HCT116 (cell line): ENCODE measurements at regions of chr1 and their contacts with region 1.

Region 1: DNA sequence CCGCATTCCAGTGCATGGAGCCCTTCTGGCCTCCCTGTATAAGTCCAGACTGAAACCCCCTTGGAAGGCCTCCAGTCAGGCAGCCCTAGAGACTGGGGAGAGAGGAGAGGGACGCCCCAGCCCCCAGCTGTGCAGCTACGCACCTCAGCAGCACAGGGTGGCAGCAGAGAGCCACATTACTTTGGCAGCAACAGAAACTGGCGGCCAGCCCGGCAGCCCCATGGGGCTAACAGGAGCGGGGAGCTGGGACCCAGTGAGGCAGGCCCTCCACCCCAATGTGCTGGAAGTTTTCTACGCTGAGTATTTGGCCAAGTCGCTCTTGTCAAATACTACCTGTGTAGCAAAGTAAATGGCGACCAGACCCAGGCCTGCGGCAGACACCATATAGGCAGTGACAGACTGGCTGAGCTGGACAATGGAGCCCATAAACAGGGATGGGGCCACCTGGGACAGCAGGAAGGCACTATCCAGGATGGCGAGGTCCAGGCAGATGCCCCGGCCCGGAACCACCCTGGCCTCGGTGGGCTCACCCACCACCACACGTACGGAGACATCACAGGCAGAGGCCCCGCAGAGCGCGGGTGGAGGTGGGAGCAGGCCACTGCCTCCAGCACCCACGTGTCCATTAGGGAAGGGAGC is 21.2 kb downstream of the SLC45A3 start:
- DNase-seq: no peak
- ATAC-seq: peak; percentile 90
- H3K4me3 ChIP-seq: no peak overlapping the region
- H3K27ac ChIP-seq: no peak overlapping the region
- H3K4me1 ChIP-seq: peaks cover 4 to 10% of the 10 kb centered on the region in 2 experiments
- H3K27me3 ChIP-seq: no peaks in the 10 kb centered on the region
- CTCF ChIP-seq: peak; percentile 83 to 89 (median 88)
- POLR2A ChIP-seq: no peak
- RAD21 ChIP-seq: peak; percentile 96

Region 2: DNA sequence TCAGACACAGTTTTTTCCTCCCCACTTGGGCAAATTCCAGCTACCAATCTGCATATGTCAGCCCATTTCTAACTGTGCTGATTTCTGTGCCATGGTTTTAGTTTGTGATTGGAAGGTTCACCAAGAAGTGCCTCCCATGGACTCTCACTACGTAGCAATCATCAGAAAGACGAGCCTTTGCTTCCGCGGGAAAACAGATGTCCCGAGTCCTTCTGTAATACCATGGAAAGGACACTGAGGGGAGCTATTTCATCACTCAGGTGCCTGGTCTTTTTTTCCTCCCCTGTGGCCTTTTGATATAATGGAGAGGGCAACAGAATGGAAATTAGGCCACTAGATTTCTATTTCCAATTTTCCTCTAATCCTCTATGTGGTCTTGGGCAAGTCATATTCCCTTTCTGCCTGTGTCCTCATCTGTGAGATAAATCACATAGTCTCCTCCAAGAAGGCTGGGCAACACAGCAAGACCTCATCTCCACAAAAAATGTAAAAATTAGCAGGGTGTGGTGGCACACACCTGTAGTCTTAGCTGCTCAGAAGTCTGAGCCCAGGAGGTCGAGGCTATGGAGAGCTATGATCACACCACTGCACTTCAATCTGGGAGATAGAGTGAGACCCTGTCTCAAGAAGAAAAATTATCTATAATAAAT is 262.0 kb before region 1 on chr1:
- CTCF ChIA-PET with region 1: interaction called, 11 read pairs
- POLR2A ChIA-PET with region 1: no interaction called
- RAD21 ChIA-PET with region 1: interaction called in 1 of 2 experiments, 9 read pairs
- intact Hi-C with region 1: loop called (anchors 1 kb)
- DNase-seq: peak; percentile 77
- ATAC-seq: peak; percentile 99
- H3K4me3 ChIP-seq: no peak overlapping the region
- H3K27ac ChIP-seq: no peak overlapping the region
- H3K4me1 ChIP-seq: peaks cover 0 to 8% of the 10 kb centered on the region in 2 experiments; a peak in 2 of 4 replicates
- H3K27me3 ChIP-seq: no peaks in the 10 kb centered on the region
- CTCF ChIP-seq: peak; percentile 82 to 97 (median 93)
- POLR2A ChIP-seq: no peak
- RAD21 ChIP-seq: peak; percentile 99

Region 3: DNA sequence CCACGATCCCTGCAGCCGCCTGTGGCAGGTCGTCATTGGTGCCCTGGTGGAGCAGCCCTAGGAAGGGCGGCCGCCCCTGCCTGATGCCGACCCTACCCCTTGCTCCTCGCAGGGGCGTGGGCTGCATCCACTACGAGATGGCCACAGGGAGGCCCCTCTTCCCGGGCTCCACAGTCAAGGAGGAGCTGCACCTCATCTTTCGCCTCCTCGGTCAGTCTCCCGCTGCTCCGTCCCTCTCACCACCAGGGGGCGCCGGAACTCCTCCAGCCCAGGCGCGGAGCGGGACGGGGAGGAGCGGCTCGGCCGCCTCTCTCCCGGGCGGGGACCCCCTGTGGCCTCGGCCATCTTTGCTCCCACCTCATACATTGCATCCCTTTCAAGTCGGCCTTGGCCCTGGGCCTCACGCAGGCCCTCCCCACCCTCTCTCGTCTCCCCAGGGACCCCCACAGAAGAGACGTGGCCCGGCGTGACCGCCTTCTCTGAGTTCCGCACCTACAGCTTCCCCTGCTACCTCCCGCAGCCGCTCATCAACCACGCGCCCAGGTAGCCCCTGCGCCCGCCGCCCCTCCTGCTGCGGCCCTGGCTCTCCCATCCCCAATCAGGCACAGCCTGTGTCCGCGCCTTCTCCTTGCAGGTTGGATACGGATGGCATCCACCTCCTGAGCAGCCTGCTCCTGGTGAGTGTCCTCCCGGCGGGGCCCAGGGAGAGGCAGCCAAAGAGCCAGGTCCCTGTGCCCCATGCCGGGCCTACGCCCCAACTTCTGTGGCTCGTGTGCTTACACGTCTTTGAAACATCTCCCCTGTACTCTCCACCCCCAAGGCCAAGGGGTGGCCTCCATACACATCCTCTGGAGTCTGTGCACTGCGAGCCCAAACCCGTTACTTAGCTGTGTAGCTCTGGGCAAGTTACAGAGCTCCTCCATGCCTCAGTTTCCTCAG is 129.9 kb before region 1 on chr1:
- CTCF ChIA-PET with region 1: interaction called, 35 read pairs
- POLR2A ChIA-PET with region 1: no interaction called
- RAD21 ChIA-PET with region 1: interaction called, 6 to 21 read pairs
- intact Hi-C with region 1: loop called (anchors 1 kb)
- DNase-seq: peak; percentile 19
- ATAC-seq: peak; percentile 90
- H3K4me3 ChIP-seq: no peak overlapping the region
- H3K27ac ChIP-seq: no peak overlapping the region
- H3K4me1 ChIP-seq: peaks cover 0 to 4% of the 10 kb centered on the region in 2 experiments; a peak in 1 of 4 replicates
- H3K27me3 ChIP-seq: no peaks in the 10 kb centered on the region
- CTCF ChIP-seq: peak; percentile 74 to 89 (median 86)
- POLR2A ChIP-seq: no peak
- RAD21 ChIP-seq: peak; percentile 83

Region 4: GRCh38 chr1:205631727-205632373 is 27.2 kb before region 1 on chr1 and contains the start of gene ELK4:
- CTCF ChIA-PET with region 1: interaction called, 10 read pairs
- POLR2A ChIA-PET with region 1: interaction called, 6 read pairs
- RAD21 ChIA-PET with region 1: interaction called, 3 to 4 read pairs
- intact Hi-C with region 1: no loop called
- DNase-seq: peak; percentile 96
- ATAC-seq: peak; percentile 87
- H3K4me3 ChIP-seq: peak within 1 kb of the TSS; percentile 65 to 88
- H3K27ac ChIP-seq: peak within 1 kb of the TSS; percentile 96
- H3K4me1 ChIP-seq: peaks cover 14 to 16% of the 10 kb centered on the region in 2 experiments; a peak in 3 of 4 replicates
- H3K27me3 ChIP-seq: no peaks in the 10 kb centered on the region
- CTCF ChIP-seq: peak; percentile 54 to 72 (median 56); a peak in 5 of 6 replicates
- POLR2A ChIP-seq: peak; percentile 64
- RAD21 ChIP-seq: peak; percentile 78
- total RNA-seq, gene ELK4: 46.2 TPM

Region 5: GRCh38 chr1:205680073-205680851 is 21.2 kb after region 1 on chr1 and contains the start of gene SLC45A3:
- CTCF ChIA-PET with region 1: interaction called, 13 read pairs
- POLR2A ChIA-PET with region 1: no interaction called
- RAD21 ChIA-PET with region 1: interaction called in 1 of 2 experiments, 9 read pairs
- intact Hi-C with region 1: no loop called
- DNase-seq: no peak
- ATAC-seq: peak; percentile 79
- H3K4me3 ChIP-seq: peak within 1 kb of the TSS; percentile 64 to 78
- H3K27ac ChIP-seq: peak within 1 kb of the TSS; percentile 86
- H3K4me1 ChIP-seq: peaks cover 16 to 26% of the 10 kb centered on the region in 2 experiments
- H3K27me3 ChIP-seq: no peaks in the 10 kb centered on the region
- CTCF ChIP-seq: no peak
- POLR2A ChIP-seq: no peak
- RAD21 ChIP-seq: no peak
- total RNA-seq, gene SLC45A3: 12.3 TPM

Region 6: DNA sequence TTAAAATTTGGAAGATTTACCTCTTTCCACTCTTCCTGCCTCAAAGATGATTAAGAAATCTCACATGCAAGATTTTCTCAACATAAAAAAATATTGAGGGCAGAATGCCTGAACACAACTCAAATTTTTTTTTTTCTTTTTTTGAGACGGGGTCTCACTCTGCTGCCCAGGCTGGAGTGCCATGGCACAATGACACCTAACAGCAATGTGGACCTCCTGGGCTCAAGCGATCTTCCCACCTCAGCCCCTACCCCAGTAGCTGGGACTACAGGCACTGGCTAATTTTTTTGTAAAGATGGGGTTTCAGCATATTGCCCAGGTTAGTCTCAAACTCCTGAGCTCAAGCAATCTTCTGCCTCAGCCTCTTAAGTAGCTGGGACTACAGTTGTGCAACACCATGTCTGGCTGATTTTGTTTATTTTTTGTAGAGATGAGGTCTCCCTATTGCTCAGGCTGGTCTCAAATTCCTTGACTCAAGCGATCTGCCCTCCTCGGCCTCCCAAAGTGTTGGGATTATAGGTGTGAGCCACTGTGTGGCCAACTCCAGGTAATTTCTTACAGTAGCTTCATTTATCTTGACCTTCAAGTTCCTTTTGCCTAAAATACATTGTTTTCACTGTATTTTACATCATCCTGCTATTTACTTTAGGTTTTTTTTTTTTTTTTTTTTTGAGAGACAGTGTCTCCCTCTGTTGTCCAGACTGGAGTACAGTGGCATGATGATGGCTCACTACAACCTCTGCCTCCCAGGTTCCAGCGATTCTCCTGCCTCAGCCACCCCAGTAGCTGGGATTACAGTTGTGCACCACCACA is 80.5 kb after region 1 on chr1:
- CTCF ChIA-PET with region 1: interaction called, 13 read pairs
- POLR2A ChIA-PET with region 1: no interaction called
- RAD21 ChIA-PET with region 1: no interaction called
- intact Hi-C with region 1: no loop called
- DNase-seq: no peak
- ATAC-seq: peak; percentile 47; the same call in 1 of the 2 replicates
- H3K4me3 ChIP-seq: no peak overlapping the region
- H3K27ac ChIP-seq: no peak overlapping the region
- H3K4me1 ChIP-seq: peaks cover 20 to 29% of the 10 kb centered on the region in 2 experiments
- H3K27me3 ChIP-seq: no peaks in the 10 kb centered on the region
- CTCF ChIP-seq: peak in 2 of 3 experiments; percentile 19 to 20; a peak in 3 of 6 replicates
- POLR2A ChIP-seq: no peak
- RAD21 ChIP-seq: no peak

Region 7: DNA sequence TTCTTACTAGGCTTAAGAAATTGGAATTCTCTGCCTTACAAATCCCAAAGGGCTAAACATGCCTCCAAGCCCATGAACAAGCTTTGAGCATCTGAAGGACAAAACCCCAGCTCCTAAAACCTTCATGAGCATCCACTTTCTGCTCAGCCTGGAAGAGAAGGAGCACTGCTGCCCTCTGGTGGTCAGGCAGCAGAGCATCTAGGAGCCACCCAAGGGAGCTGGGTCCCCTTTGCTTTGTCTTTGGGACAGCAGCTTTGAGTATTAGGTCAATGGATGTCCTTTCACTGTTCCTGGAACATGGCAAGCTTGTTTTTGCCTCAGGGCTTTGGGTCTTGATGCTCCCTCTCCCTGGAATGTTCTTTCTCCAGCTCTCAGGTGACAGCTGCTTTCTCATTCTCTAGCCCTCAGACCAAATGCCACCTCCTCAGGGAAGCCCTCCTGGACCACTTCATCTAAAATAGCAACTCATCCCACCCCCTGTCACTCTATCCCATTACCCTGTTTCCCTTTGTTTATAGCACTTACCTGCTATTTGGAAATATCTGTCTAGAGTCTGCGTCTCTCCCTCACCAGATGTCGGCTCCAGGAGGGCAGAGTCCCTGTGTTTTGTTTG is 318.4 kb after region 1 on chr1:
- CTCF ChIA-PET with region 1: interaction called, 72 read pairs
- POLR2A ChIA-PET with region 1: interaction called, 7 read pairs
- RAD21 ChIA-PET with region 1: interaction called in 1 of 2 experiments, 18 read pairs
- intact Hi-C with region 1: loop called (anchors 1 kb)
- DNase-seq: peak; percentile 68
- ATAC-seq: peak; percentile 94
- H3K4me3 ChIP-seq: no peak overlapping the region
- H3K27ac ChIP-seq: no peak overlapping the region
- H3K4me1 ChIP-seq: peaks cover 6 to 10% of the 10 kb centered on the region in 2 experiments; a peak in 3 of 4 replicates
- H3K27me3 ChIP-seq: no peaks in the 10 kb centered on the region
- CTCF ChIP-seq: peak; percentile 96 to 98 (median 97)
- POLR2A ChIP-seq: no peak
- RAD21 ChIP-seq: peak; percentile 98

Region 8: GRCh38 chr1:206001476-206001888 is 342.4 kb after region 1 on chr1:
- CTCF ChIA-PET with region 1: no interaction called
- POLR2A ChIA-PET with region 1: no interaction called
- RAD21 ChIA-PET with region 1: no interaction called
- intact Hi-C with region 1: no loop called
- DNase-seq: peak; percentile 73
- ATAC-seq: peak; percentile 85
- H3K4me3 ChIP-seq: peak overlapping the region in 1 of 2 experiments; percentile 38; a peak in 3 of 4 replicates
- H3K27ac ChIP-seq: peak overlapping the region; percentile 33; the same call in 1 of the 2 replicates
- H3K4me1 ChIP-seq: peaks cover 33 to 47% of the 10 kb centered on the region in 2 experiments
- H3K27me3 ChIP-seq: no peaks in the 10 kb centered on the region
- CTCF ChIP-seq: no peak
- POLR2A ChIP-seq: no peak
- RAD21 ChIP-seq: no peak